ENCODE measurements at regions of chr7 and their contacts with region 1.

Region 1: GRCh38 chr7:99040104-99040958 is 103.6 kb downstream of the SMURF1 start:
- DNase-seq: peak; percentile 70

Region 2: DNA sequence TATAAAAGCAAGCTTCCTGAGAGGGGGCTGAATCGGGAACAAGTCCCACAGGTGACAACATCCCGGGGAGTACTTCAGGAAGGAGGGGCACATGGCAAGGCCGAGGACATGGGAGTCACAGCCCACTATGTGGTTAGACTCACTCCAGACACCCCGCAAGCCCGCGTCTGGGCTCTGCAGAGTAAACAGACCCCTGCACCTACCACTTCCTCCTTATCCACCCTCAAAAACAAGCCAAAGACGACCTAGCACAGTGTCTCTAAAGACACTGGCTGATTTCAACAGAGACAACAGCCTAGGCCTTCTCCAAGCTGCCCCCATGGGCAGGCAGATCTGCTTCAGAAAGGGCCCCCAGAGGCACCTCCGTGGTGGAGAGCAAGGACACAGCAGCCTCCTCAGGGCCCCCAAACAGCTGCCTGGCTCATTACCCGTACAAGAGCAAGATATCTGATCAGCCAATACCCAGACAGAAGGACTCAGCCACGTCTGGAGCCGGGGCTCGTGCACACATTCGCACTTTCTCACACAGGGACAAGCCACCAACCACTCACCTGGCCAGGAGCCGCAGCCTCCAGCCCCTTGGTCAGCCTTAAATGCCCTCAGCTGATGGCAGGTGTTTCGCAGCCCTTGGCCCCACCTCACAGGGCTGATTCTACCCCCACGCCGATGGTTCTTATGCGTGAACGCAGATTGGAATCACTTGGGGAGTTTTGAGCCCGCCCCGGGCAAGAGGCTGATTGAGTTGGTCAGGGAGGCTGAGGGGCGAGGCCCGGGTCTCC is 178.3 kb after region 1 on chr7:
- in situ Hi-C with region 1: no loop called
- DNase-seq: peak; percentile 62

Region 3: DNA sequence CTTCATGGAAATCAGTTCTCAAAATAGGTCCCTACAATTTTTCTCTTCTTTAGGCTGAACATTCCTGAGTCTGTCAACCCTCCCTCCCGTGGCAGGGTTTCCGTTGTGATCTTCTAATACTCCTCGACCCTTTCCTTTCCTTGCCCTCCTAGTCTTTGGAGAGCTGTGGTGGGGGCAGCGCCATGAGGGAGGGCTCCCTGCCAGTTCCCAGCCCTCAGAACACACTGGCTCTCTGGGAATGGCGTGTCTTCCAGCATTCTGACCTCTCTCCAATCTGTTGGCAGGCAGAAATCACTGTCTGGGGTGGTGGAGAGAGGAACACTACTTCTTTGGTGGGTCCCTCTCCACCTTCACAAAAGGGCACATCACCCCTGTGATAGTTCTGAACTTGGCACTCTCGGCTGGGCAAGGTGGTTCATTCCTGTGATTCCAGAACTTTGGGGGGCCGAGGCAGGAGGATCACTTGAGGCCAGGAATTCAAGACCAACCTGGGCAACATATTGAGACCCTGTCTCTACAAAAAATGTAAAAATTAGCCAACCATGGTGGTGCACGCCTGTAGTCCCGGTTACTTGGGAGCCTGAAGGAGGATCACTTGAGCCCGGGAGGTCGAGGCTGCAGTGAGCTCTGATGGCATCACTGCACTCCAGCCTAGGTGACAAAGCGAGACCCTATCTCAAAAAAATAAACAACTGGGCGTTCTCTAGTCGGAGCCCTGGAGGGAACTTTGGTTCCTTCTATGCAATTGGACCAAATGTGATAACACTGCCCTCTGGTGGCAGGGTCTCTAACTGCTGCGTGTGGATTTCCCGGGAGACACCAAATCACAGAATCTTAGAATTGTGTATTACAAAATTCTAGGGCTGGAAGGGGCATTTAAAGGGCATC is 272.2 kb after region 1 on chr7:
- in situ Hi-C with region 1: loop called (anchors 25 kb)
- DNase-seq: peak; percentile 78

Region 4: GRCh38 chr7:99514050-99514449 is 473.7 kb after region 1 on chr7:
- in situ Hi-C with region 1: no loop called
- DNase-seq: no peak